ENCODE measurements at regions of chr7 and their contacts with region 1.

Region 1: DNA sequence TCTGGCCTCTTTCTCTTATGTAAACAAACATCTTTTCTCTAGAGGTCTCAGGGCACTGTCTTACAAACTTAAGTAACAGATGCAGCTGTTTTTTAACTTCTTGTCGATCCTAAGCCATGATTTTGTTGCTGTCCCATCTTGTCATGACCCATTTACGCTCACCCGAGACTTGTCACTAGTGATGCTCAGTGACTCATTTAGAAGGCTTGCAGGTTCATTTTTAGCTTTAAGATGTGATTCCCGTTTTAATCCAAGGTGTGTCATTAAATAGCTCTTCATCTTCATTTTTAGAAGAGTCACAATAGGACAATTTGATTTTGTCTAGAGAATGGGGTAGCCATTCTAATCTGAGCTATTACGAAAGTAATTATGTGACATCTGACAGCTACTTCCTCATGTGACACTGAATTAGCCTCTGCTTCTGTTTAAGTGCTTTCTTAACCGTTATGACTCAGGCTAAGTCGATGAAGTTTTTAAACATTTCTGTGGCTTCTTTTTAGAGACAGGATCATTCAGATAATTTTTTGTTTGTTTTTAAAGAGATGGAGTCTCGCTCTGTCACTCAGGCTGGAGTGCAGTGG is 42.7 kb downstream of the SPDYE5 start:
- DNase-seq: peak; percentile 73 to 89 (median 84)
- H3K4me3 ChIP-seq: peak overlapping the region in 1 of 3 experiments; percentile 1
- H3K4me3 Mint-ChIP-seq: no peak overlapping the region
- H3K27ac ChIP-seq: peak overlapping the region; percentile 83 to 89
- H3K27ac Mint-ChIP-seq: peak overlapping the region; percentile 84 to 96 (median 94)
- H3K4me1 ChIP-seq: peaks cover 13 to 14% of the 10 kb centered on the region in 2 donors
- H3K4me1 Mint-ChIP-seq: peaks cover 18% of the 10 kb centered on the region
- H3K27me3 ChIP-seq: no peaks in the 10 kb centered on the region
- H3K27me3 Mint-ChIP-seq: peaks cover 0 to 3% (median 0%) of the 10 kb centered on the region in 3 donors
- CTCF ChIP-seq: no peak

Region 2: DNA sequence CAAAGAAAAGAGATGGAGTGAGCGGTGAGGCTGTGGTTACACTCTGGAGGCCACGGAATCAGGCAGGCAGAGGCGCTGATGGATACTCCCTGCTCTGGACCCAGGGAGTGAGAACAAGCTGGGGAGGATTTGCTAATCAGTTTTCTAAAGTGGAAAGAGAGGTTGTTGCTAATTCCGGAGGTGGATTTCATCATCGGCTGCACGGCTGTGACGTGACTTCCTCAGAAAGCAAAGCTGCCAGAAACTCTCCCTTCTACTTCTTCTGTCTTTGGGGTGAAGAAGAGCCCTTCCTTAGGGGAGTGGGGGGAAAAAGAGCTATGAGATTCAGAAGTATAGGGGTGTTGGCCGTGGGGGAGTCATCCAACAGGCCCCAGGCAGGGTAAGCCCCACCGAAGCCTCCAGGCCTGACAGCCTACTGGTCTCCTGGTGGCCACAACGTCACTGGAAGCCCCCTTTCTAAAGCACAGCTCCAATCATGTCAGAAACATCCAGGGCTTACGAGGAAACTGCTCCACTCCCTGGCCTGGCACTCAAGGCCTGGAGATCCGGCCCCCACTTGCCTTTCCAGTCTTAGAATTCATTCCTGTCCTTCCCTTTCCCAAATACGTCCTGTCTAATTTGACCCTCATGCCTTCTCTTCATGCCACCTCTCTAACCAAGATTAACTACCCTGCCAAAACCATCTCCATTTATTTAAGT is 89.5 kb after region 1 on chr7:
- intact Hi-C with region 1: loop called in 1 of 2 experiments (anchors 5 kb)
- DNase-seq: peak; percentile 92 to 97 (median 96)
- H3K4me3 ChIP-seq: peak overlapping the region in 2 of 3 experiments; percentile 6 to 51
- H3K4me3 Mint-ChIP-seq: peak overlapping the region; percentile 63 to 87
- H3K27ac ChIP-seq: peak overlapping the region; percentile 90 to 91
- H3K27ac Mint-ChIP-seq: peak overlapping the region; percentile 95 to 99 (median 98)
- H3K4me1 ChIP-seq: peaks cover 61 to 67% of the 10 kb centered on the region in 2 donors
- H3K4me1 Mint-ChIP-seq: peaks cover 61% of the 10 kb centered on the region
- H3K27me3 ChIP-seq: no peaks in the 10 kb centered on the region
- H3K27me3 Mint-ChIP-seq: peaks cover 0 to 4% (median 0%) of the 10 kb centered on the region in 3 donors
- CTCF ChIP-seq: no peak

Measured in CD14-positive monocyte (primary cell).